ENCODE measurements at regions of chr7 and their contacts with region 1.

Region 1: GRCh38 chr7:123797673-123798527 is 47.1 kb upstream of the HYAL4 start:
- DNase-seq: no peak
- H3K4me3 Mint-ChIP-seq: no peak overlapping the region
- H3K27ac Mint-ChIP-seq: no peak overlapping the region
- H3K4me1 Mint-ChIP-seq: no peaks in the 10 kb centered on the region
- H3K27me3 Mint-ChIP-seq: no peaks in the 10 kb centered on the region

Region 2: GRCh38 chr7:123635551-123636359 is 162.1 kb before region 1 on chr7:
- CTCF ChIA-PET with region 1: no interaction called
- intact Hi-C with region 1: loop called (anchors 5 kb)
- DNase-seq: no peak
- H3K4me3 Mint-ChIP-seq: no peak overlapping the region
- H3K27ac Mint-ChIP-seq: no peak overlapping the region
- H3K4me1 Mint-ChIP-seq: no peaks in the 10 kb centered on the region
- H3K27me3 Mint-ChIP-seq: peaks cover 17% of the 10 kb centered on the region

Region 3: GRCh38 chr7:123692471-123692877 is 105.4 kb before region 1 on chr7:
- CTCF ChIA-PET with region 1: no interaction called
- intact Hi-C with region 1: no loop called
- DNase-seq: no peak
- H3K4me3 Mint-ChIP-seq: no peak overlapping the region
- H3K27ac Mint-ChIP-seq: no peak overlapping the region
- H3K4me1 Mint-ChIP-seq: no peaks in the 10 kb centered on the region
- H3K27me3 Mint-ChIP-seq: no peaks in the 10 kb centered on the region

Region 4: GRCh38 chr7:123823898-123824753 is 26.2 kb after region 1 on chr7:
- CTCF ChIA-PET with region 1: interaction called, 10 read pairs
- intact Hi-C with region 1: loop called (anchors 1 kb)
- DNase-seq: peak; percentile 85
- H3K4me3 Mint-ChIP-seq: no peak overlapping the region
- H3K27ac Mint-ChIP-seq: peak overlapping the region; percentile 76
- H3K4me1 Mint-ChIP-seq: peaks cover 21% of the 10 kb centered on the region
- H3K27me3 Mint-ChIP-seq: peaks cover 13% of the 10 kb centered on the region

Region 5: GRCh38 chr7:123871998-123872867 is 74.3 kb after region 1 on chr7:
- CTCF ChIA-PET with region 1: interaction called, 106 read pairs
- intact Hi-C with region 1: loop called (anchors 1 kb)
- DNase-seq: peak; percentile 67
- H3K4me3 Mint-ChIP-seq: no peak overlapping the region
- H3K27ac Mint-ChIP-seq: no peak overlapping the region
- H3K4me1 Mint-ChIP-seq: no peaks in the 10 kb centered on the region
- H3K27me3 Mint-ChIP-seq: peaks cover 3% of the 10 kb centered on the region

Region 6: GRCh38 chr7:124101173-124101768 is 303.4 kb after region 1 on chr7:
- CTCF ChIA-PET with region 1: no interaction called
- intact Hi-C with region 1: loop called (anchors 5 kb)
- DNase-seq: peak; percentile 8
- H3K4me3 Mint-ChIP-seq: no peak overlapping the region
- H3K27ac Mint-ChIP-seq: no peak overlapping the region
- H3K4me1 Mint-ChIP-seq: no peaks in the 10 kb centered on the region
- H3K27me3 Mint-ChIP-seq: no peaks in the 10 kb centered on the region